Caco-2 (cell line): ENCODE measurements at regions of chr11 and their contacts with region 1.

Region 1: DNA sequence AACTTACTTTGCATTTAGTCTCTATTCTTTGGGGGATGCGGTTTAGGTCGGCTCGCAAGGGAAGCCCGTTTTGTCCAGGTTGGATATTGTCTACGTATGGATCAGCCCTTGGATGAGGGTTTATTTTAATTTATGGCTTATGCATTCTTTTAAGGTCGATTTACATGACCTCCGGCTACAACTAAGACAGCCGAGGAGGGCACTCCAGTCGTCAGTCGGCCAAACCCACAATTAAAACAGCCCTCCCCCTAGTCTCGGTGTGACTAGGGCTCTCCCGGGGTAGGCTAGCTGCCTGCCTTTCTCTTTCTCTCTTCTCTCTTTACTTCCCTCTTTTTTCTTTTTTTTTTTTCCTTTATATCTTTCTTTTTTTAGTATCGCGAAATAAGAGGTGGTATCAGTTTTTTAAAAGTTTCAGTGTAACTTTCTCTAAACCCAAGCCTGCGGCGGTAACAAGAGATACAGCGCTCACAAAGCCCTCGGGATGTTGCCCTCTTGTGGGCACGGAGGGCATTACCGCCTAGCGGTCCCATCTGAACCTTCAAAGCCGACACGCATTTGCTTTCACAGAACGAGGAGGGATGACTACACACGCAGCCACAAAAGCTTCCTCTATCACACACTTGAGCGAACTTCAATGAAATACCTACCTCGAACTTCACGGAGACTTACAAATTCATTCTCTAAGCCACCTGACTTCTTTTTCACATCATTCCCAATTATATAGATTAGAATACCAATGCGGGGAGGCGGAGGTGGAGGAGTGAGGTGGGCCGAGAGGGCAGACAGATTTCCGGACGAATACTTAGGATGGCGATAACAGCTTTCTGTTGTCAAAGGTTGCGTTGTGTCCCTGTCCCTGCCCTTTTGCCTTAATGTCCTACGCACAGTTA is 132.3 kb upstream of the C11orf58 start:
- DNase-seq: peak; percentile 83 to 93
- H3K4me3 ChIP-seq: peak overlapping the region; percentile 74
- H3K4me3 Mint-ChIP-seq: no peak overlapping the region
- H3K27ac Mint-ChIP-seq: peak overlapping the region; percentile 44
- H3K4me1 ChIP-seq: peaks cover 4% of the 10 kb centered on the region; the same call in 1 of the 2 replicates
- H3K4me1 Mint-ChIP-seq: no peaks in the 10 kb centered on the region
- H3K27me3 ChIP-seq: no peaks in the 10 kb centered on the region; the same call in 1 of the 2 replicates
- H3K27me3 Mint-ChIP-seq: no peaks in the 10 kb centered on the region
- CTCF ChIP-seq: peak; percentile 95 to 96

Region 2: GRCh38 chr11:16114978-16115871 is 490.9 kb before region 1 on chr11:
- CTCF ChIA-PET with region 1: no interaction called
- POLR2A ChIA-PET with region 1: no interaction called
- intact Hi-C with region 1: loop called (anchors 2 kb)
- DNase-seq: peak; percentile 51 to 55
- H3K4me3 ChIP-seq: no peak overlapping the region
- H3K4me3 Mint-ChIP-seq: peak overlapping the region; percentile 58
- H3K27ac Mint-ChIP-seq: peak overlapping the region; percentile 85
- H3K4me1 ChIP-seq: peaks cover 55% of the 10 kb centered on the region
- H3K4me1 Mint-ChIP-seq: peaks cover 47% of the 10 kb centered on the region
- H3K27me3 ChIP-seq: no peaks in the 10 kb centered on the region
- H3K27me3 Mint-ChIP-seq: no peaks in the 10 kb centered on the region
- CTCF ChIP-seq: no peak

Region 3: GRCh38 chr11:16252373-16252772 is 353.8 kb before region 1 on chr11:
- CTCF ChIA-PET with region 1: no interaction called
- POLR2A ChIA-PET with region 1: no interaction called
- intact Hi-C with region 1: loop called (anchors 2 kb)
- DNase-seq: peak in 1 of 2 experiments; percentile 34
- H3K4me3 ChIP-seq: no peak overlapping the region
- H3K4me3 Mint-ChIP-seq: no peak overlapping the region
- H3K27ac Mint-ChIP-seq: no peak overlapping the region
- H3K4me1 ChIP-seq: no peaks in the 10 kb centered on the region
- H3K4me1 Mint-ChIP-seq: no peaks in the 10 kb centered on the region
- H3K27me3 ChIP-seq: no peaks in the 10 kb centered on the region
- H3K27me3 Mint-ChIP-seq: no peaks in the 10 kb centered on the region
- CTCF ChIP-seq: peak; percentile 38 to 50

Region 4: DNA sequence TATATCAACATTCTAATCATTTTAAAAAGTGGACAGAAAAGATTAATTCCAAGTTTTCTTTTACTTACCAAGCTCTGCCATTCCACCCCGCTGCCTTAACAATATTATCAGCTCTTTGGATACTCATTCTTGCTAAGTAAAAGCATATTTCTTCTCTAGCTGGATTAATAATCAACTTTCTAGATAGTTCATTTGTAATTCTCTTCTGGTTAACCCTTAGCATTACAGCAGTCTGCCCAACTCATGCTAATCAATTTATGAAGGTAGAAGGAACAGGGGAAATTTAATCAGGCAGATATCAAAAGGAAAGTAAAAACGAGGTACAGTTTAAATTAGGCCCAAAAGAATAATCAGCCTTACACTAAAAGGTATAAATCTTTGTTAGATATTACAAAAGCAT is 208.7 kb before region 1 on chr11:
- CTCF ChIA-PET with region 1: interaction called, 3 read pairs
- POLR2A ChIA-PET with region 1: no interaction called
- intact Hi-C with region 1: loop called (anchors 2 kb)
- DNase-seq: no peak
- H3K4me3 ChIP-seq: peak overlapping the region; percentile 39
- H3K4me3 Mint-ChIP-seq: peak overlapping the region; percentile 62
- H3K27ac Mint-ChIP-seq: peak overlapping the region; percentile 33
- H3K4me1 ChIP-seq: peaks cover 36% of the 10 kb centered on the region
- H3K4me1 Mint-ChIP-seq: peaks cover 27% of the 10 kb centered on the region
- H3K27me3 ChIP-seq: no peaks in the 10 kb centered on the region
- H3K27me3 Mint-ChIP-seq: no peaks in the 10 kb centered on the region
- CTCF ChIP-seq: no peak

Region 5: GRCh38 chr11:16456366-16456765 is 149.8 kb before region 1 on chr11:
- CTCF ChIA-PET with region 1: no interaction called
- POLR2A ChIA-PET with region 1: no interaction called
- intact Hi-C with region 1: loop called (anchors 5 kb)
- DNase-seq: no peak
- H3K4me3 ChIP-seq: no peak overlapping the region
- H3K4me3 Mint-ChIP-seq: no peak overlapping the region
- H3K27ac Mint-ChIP-seq: no peak overlapping the region
- H3K4me1 ChIP-seq: no peaks in the 10 kb centered on the region
- H3K4me1 Mint-ChIP-seq: no peaks in the 10 kb centered on the region
- H3K27me3 ChIP-seq: no peaks in the 10 kb centered on the region
- H3K27me3 Mint-ChIP-seq: peaks cover 4% of the 10 kb centered on the region
- CTCF ChIP-seq: no peak

Region 6: DNA sequence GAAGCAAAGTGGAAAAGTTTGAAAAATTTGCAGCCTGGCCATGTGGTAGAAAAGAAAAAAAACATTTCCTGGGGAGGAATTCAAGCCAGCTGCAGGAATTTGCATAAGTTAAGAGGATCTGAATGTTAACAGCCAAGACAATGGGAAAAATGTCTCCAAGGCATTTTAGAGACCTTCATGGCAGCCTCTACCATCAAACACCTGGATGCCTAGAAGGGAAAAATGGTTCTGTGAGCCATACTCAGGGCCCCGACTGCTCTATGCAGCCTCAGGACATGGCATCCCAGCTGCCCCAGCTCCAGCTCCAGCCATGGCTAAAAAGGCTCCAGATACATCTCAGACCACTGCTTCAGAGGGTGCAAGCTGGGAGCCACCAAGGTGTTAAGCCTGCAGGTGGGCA is 100.7 kb before region 1 on chr11:
- CTCF ChIA-PET with region 1: no interaction called
- POLR2A ChIA-PET with region 1: no interaction called
- intact Hi-C with region 1: no loop called
- DNase-seq: no peak
- H3K4me3 ChIP-seq: no peak overlapping the region
- H3K4me3 Mint-ChIP-seq: no peak overlapping the region
- H3K27ac Mint-ChIP-seq: no peak overlapping the region
- H3K4me1 ChIP-seq: no peaks in the 10 kb centered on the region
- H3K4me1 Mint-ChIP-seq: no peaks in the 10 kb centered on the region
- H3K27me3 ChIP-seq: no peaks in the 10 kb centered on the region
- H3K27me3 Mint-ChIP-seq: no peaks in the 10 kb centered on the region
- CTCF ChIP-seq: no peak